ENCODE measurements at regions of chr11 and their contacts with region 1.

Region 1: DNA sequence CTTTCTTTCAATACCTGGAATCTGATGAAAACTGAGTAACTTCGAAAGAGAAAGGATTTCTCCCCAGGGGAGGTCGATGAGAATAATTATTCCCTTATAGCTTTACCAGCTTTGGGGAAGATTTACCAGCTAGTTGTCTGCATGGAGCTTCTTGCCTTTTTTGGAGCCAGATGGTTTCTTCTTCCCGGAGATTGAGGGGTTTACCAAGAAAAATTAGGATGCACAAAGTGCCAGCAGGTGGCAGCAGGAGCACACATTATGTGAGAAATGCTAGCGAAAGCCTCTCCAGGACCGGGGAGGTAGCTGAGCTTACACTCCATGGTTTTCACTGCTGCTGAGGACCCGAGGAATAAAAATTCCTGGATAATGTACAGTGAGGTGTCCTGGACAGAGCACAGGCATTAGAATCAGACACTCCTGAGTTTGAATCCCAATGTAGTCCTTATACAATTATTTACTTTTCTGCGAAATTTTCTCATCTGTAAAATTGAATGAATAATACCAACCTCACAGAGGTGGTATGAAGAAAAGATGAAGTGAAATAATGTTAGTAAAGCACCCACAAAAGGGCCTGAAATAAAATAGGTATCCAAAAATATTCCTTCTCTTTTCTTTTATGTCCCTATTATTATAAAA is 46.0 kb upstream of the PARVA start:
- DNase-seq: peak; percentile 78
- H3K4me3 Mint-ChIP-seq: no peak overlapping the region
- H3K27ac Mint-ChIP-seq: no peak overlapping the region
- H3K4me1 Mint-ChIP-seq: peaks cover 18% of the 10 kb centered on the region
- H3K27me3 Mint-ChIP-seq: no peaks in the 10 kb centered on the region
- CTCF ChIP-seq: peak; percentile 76

Region 2: GRCh38 chr11:12200279-12201010 is 130.9 kb before region 1 on chr11:
- CTCF ChIA-PET with region 1: no interaction called
- intact Hi-C with region 1: no loop called
- DNase-seq: no peak
- H3K4me3 Mint-ChIP-seq: no peak overlapping the region
- H3K27ac Mint-ChIP-seq: no peak overlapping the region
- H3K4me1 Mint-ChIP-seq: peaks cover 25% of the 10 kb centered on the region
- H3K27me3 Mint-ChIP-seq: no peaks in the 10 kb centered on the region
- CTCF ChIP-seq: no peak

Region 3: DNA sequence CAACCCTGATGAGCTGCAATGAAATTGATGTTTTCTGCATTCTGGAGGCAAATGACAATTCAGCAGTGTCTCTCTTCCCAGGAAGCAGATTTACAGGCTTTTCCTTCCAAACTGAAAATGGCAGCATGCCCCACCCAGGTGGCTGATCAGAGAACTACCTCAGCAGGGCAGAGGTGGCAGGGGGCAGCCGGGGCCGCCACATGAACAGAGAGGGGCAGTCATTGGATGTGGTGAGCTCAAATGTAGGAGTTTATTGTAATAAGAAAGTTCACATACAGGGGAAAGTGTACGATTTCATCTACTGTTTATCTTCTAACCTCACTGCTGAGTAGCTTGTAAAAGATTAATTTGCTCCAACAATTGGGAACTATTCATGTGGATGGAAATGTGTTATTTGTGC is 30.3 kb after region 1 on chr11:
- CTCF ChIA-PET with region 1: interaction called, 5 read pairs
- intact Hi-C with region 1: loop called (anchors 2 kb)
- DNase-seq: peak; percentile 66
- H3K4me3 Mint-ChIP-seq: peak overlapping the region; percentile 25
- H3K27ac Mint-ChIP-seq: peak overlapping the region; percentile 10
- H3K4me1 Mint-ChIP-seq: peaks cover 74% of the 10 kb centered on the region
- H3K27me3 Mint-ChIP-seq: no peaks in the 10 kb centered on the region
- CTCF ChIP-seq: no peak

Region 4: GRCh38 chr11:12411806-12412727 is 80.7 kb after region 1 on chr11:
- CTCF ChIA-PET with region 1: interaction called, 10 read pairs
- intact Hi-C with region 1: loop called (anchors 1 kb)
- DNase-seq: peak; percentile 81
- H3K4me3 Mint-ChIP-seq: no peak overlapping the region
- H3K27ac Mint-ChIP-seq: peak overlapping the region; percentile 71
- H3K4me1 Mint-ChIP-seq: peaks cover 13% of the 10 kb centered on the region
- H3K27me3 Mint-ChIP-seq: no peaks in the 10 kb centered on the region
- CTCF ChIP-seq: peak; percentile 86

Region 5: DNA sequence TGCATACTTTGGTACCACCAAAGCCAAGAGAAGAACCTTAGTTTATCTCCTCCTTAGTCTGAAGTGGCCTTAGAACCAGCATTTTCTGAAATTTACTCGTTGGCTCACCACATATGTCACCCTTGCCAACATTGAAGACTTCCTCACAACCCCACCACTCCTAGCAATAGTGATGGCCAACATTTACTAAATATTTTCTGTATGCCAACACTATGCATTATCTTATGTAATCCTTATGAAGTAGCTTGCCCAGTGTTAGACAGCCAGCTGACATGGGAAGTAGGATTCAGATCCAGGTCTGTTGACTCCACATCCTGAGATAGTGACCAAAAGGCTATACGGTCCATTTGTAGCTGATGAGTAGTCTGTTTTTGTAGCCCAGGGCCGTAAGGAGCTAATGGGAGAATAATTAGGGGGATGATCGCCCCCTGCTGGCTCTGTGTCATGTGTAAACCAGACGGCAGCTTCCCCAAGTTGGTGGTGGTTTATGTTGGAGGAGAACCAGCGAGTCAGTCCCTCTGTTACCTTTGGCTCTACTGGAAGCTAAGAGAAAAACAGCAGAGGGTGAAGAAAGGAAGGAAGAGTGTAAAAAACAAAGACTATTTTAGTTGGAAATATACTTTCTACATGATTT is 557.3 kb after region 1 on chr11:
- CTCF ChIA-PET with region 1: interaction called, 13 read pairs
- intact Hi-C with region 1: loop called (anchors 2 kb)
- DNase-seq: peak; percentile 82
- H3K4me3 Mint-ChIP-seq: no peak overlapping the region
- H3K27ac Mint-ChIP-seq: peak overlapping the region; percentile 33
- H3K4me1 Mint-ChIP-seq: no peaks in the 10 kb centered on the region
- H3K27me3 Mint-ChIP-seq: no peaks in the 10 kb centered on the region
- CTCF ChIP-seq: peak; percentile 67